PC-3 (cell line): ENCODE measurements at regions of chr6 and their contacts with region 1.

Region 1: GRCh38 chr6:30742316-30743098 is at the start of gene FLOT1:
- DNase-seq: peak; percentile 98
- ATAC-seq: peak; percentile 74
- H3K4me3 ChIP-seq: peak within 1 kb of the TSS; percentile 91
- H3K27ac ChIP-seq: peak within 1 kb of the TSS; percentile 98
- H3K4me1 ChIP-seq: peaks cover 71% of the 10 kb centered on the region
- H3K27me3 ChIP-seq: no peaks in the 10 kb centered on the region
- CTCF ChIP-seq: no peak
- total RNA-seq, gene FLOT1: 305 and 401 TPM in 2 replicates

Region 2: DNA sequence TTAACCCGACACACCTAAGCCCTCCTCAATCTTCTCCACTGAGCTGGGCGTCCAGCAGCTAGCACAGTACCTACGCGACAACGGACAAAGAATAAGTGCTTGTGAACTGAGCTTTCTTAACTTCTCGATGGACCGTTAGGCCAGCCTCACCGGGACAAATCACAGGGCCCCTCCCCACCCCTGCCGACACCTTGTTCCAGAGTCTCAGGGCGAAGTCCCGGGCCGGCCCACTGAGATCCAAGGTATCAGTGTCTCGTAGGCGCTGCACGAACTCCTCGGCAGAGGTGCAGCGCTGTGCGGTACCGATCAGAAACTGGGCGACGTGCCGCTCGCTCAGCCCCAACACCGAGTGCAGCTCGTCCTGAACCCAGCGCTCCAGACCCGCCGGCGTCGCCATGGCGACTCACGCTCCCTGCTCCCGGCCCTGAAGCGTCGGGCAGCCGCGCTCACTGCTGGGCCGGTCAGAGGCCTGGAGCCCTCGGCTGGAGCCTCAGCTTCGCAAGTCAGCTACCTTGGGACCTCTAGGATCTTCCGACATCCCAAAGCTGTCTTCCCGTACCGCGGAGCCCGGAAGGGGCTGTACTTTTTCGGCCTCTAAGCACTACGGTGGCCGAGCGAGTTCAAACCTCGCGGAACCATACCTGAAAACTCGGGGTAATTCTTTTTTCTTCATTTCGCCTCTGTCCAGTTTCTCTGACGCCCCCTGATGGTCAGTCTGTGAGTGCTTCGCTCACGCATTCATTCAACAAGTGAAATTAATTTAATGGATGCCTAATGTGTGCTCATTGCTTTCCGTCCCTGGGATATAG is 69.9 kb before region 1 on chr6 and contains the start of gene DHX16:
- CTCF ChIA-PET with region 1: no interaction called
- POLR2A ChIA-PET with region 1: no interaction called
- intact Hi-C with region 1: no loop called
- DNase-seq: peak; percentile 99
- ATAC-seq: peak; percentile 82
- H3K4me3 ChIP-seq: peak within 1 kb of the TSS; percentile 75
- H3K27ac ChIP-seq: no peak within 1 kb of the TSS
- H3K4me1 ChIP-seq: peaks cover 4% of the 10 kb centered on the region
- H3K27me3 ChIP-seq: no peaks in the 10 kb centered on the region
- CTCF ChIP-seq: peak; percentile 95
- total RNA-seq, gene DHX16: 50.0 and 75.6 TPM in 2 replicates

Region 3: GRCh38 chr6:30686908-30687658 is 55.4 kb before region 1 on chr6:
- CTCF ChIA-PET with region 1: no interaction called
- POLR2A ChIA-PET with region 1: interaction called, 16 read pairs
- intact Hi-C with region 1: no loop called
- DNase-seq: peak; percentile 96
- ATAC-seq: peak; percentile 58
- H3K4me3 ChIP-seq: peak overlapping the region; percentile 97
- H3K27ac ChIP-seq: peak overlapping the region; percentile 96
- H3K4me1 ChIP-seq: peaks cover 66% of the 10 kb centered on the region
- H3K27me3 ChIP-seq: no peaks in the 10 kb centered on the region
- CTCF ChIP-seq: no peak

Region 4: DNA sequence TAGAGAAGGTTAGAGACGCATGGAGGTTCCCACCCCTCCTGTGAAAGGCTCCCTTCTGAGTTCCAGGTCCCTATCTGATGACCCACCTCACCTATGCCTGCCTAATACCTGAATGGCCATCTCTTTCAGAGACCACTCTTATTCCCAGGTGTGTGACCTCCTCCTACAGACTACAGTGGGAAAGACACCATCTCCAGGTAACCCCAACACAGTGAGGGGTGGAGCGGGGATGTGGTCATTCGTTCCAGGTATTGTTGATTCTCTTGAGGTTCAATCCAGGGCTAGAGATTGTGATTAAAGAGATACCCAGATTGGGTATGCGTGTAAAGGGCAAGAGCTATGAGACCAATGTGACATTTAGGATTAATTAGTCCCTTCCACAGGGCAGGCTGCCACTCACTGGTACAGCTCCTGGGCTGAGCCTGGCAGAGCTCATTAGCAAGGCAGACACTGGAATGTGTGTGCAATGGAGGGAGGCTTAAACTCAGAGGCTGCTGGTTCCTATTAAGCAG is 48.3 kb after region 1 on chr6:
- CTCF ChIA-PET with region 1: no interaction called
- POLR2A ChIA-PET with region 1: no interaction called
- intact Hi-C with region 1: no loop called
- DNase-seq: no peak
- ATAC-seq: no peak
- H3K4me3 ChIP-seq: no peak overlapping the region
- H3K27ac ChIP-seq: no peak overlapping the region
- H3K4me1 ChIP-seq: 0 out of 2 replicates have a peak, but pooled peaks cover 5% of the 10 kb centered on the region
- H3K27me3 ChIP-seq: no peaks in the 10 kb centered on the region
- CTCF ChIP-seq: no peak